HCT116 (cell line): ENCODE measurements at regions of chr9 and their contacts with region 1.

Region 1: GRCh38 chr9:40884072-40884901 is 244.2 kb downstream of the FOXD4L6 start:
- DNase-seq: no peak
- ATAC-seq: no peak
- H3K4me3 ChIP-seq: no peak overlapping the region
- H3K27ac ChIP-seq: no peak overlapping the region
- H3K4me1 ChIP-seq: no peaks in the 10 kb centered on the region
- H3K27me3 ChIP-seq: no peaks in the 10 kb centered on the region
- CTCF ChIP-seq: no peak
- POLR2A ChIP-seq: no peak
- RAD21 ChIP-seq: no peak

Region 2: DNA sequence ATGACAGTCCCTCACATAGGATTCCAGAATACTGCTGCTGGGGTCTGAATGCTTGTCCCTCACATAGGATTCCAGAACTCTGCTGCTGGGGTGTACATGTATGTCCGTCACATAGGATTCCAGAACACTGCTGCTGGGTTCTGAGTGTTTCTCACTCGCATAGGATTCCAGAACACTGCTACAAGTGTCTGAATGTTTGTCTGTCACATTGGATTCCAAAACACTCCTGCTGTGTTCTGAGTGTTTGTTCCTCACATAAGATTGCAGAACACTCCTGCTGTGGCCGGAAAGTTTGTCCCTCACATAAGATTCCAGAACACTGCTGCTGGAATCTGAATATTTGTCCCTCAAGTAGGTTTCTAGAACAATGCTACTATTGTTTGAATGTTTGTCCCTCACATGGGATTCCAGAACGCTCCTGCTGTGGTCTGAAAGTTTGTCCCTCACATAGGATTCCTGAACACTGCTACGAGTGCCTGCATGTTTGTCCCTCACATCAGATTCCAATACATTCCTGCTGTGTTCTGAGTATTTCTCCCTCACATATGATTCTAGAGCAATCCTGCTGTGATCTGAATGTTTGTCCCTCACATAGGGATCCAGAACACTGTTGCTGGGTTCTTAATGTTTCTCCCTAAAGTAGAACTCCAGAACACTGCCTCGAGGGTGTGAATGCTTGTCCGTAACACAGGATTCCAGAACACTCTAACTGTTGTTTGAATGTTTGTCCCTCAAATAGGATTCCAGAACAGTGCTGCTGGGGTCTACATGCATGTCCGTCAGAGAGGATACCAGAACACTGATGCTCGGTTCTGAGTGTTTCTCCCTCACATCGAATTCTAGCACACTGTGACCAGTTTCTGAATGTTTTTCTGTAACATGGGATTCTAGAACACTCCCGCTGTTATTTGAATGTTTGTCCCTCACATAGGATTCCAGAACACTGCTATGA is 43.8 kb after region 1 on chr9:
- CTCF ChIA-PET with region 1: no interaction called
- POLR2A ChIA-PET with region 1: no interaction called
- RAD21 ChIA-PET with region 1: no interaction called
- intact Hi-C with region 1: loop called (anchors 5 kb)
- DNase-seq: no peak
- ATAC-seq: no peak
- H3K4me3 ChIP-seq: no peak overlapping the region
- H3K27ac ChIP-seq: no peak overlapping the region
- H3K4me1 ChIP-seq: no peaks in the 10 kb centered on the region
- H3K27me3 ChIP-seq: peaks cover 63% of the 10 kb centered on the region
- CTCF ChIP-seq: no peak
- POLR2A ChIP-seq: no peak
- RAD21 ChIP-seq: no peak